ENCODE measurements at regions of chr14 and their contacts with region 1.

Region 1: DNA sequence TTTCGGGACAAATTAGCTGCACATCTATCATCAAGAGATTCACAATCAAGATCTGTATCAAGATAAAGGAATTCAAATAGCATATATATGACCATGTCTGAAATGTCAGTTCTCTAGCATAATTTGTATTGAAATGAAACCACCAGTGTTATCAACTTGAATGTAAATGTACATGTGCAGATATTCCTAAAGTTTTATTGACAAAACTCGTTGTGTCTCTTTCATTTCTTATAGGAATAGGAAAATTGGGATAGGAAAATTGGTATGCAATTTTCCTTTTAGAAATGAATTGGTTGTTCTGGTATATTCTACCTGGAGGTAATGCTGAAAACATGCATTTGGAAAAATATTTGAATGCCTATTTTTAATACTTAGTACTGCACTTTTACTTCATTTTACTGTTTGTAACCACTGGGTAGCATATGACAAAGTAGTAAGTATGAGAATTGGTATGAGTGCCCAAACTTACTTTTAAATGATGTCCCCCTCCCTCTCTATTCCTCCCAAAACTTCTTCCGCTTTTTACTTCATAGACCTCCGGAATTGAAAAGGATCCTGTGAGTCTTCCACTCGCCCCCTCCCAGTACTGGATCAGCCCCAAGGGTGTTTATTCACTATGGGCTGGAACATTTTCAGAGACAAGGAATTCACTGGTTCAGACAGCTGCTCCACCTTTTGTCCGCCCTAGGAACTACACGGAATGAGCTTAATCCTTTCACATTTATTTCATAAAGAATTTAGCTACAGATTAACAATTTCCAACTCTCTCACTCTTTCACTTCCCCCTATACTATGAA is 21.0 kb downstream of the CNIH1 start:
- DNase-seq: peak; percentile 58
- ATAC-seq: peak; percentile 96
- H3K4me3 ChIP-seq: no peak overlapping the region
- H3K27ac ChIP-seq: peak overlapping the region; percentile 3; the same call in 1 of the 2 replicates
- H3K4me1 ChIP-seq: no peaks in the 10 kb centered on the region
- H3K27me3 ChIP-seq: no peaks in the 10 kb centered on the region
- CTCF ChIP-seq: peak; percentile 58
- POLR2A ChIP-seq: no peak
- RAD21 ChIP-seq: peak; percentile 54

Region 2: GRCh38 chr14:54040846-54041245 is 379.4 kb before region 1 on chr14:
- CTCF ChIA-PET with region 1: no interaction called
- POLR2A ChIA-PET with region 1: no interaction called
- dilution Hi-C with region 1: no loop called
- in situ Hi-C with region 1: no loop called
- intact Hi-C with region 1: no loop called
- DNase-seq: peak; percentile 42
- ATAC-seq: peak; percentile 72
- H3K4me3 ChIP-seq: no peak overlapping the region
- H3K27ac ChIP-seq: no peak overlapping the region
- H3K4me1 ChIP-seq: 0 out of 2 replicates have a peak, but pooled peaks cover 3% of the 10 kb centered on the region
- H3K27me3 ChIP-seq: no peaks in the 10 kb centered on the region; the same call in 1 of the 2 replicates
- CTCF ChIP-seq: no peak
- POLR2A ChIP-seq: no peak
- RAD21 ChIP-seq: no peak

Region 3: GRCh38 chr14:54182419-54183045 is 237.7 kb before region 1 on chr14:
- CTCF ChIA-PET with region 1: no interaction called
- POLR2A ChIA-PET with region 1: no interaction called
- dilution Hi-C with region 1: no loop called
- in situ Hi-C with region 1: no loop called
- intact Hi-C with region 1: loop called (anchors 1 kb)
- DNase-seq: peak; percentile 74
- ATAC-seq: peak; percentile 76
- H3K4me3 ChIP-seq: no peak overlapping the region
- H3K27ac ChIP-seq: no peak overlapping the region
- H3K4me1 ChIP-seq: peaks cover 9% of the 10 kb centered on the region
- H3K27me3 ChIP-seq: peaks cover 8% of the 10 kb centered on the region
- CTCF ChIP-seq: no peak
- POLR2A ChIP-seq: no peak
- RAD21 ChIP-seq: no peak

Region 4: DNA sequence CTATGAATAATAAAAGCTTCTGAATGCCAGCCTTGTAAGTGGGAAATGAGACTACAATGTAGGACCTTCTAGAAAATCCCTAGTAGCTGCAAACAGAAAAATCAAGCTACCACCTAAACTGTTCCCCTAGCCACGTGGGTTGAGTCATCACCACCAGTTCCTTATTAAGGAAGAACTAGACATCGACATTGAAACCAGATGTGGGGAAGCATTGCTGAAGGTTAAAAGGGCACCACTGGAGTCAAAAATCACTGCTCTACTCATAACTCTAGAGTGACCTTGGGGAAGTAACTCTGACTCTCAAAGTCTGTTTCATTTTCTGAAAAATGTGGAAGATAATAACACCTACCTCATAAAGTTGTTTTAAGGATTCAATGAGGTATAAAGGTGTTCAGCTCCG is 30.3 kb after region 1 on chr14:
- CTCF ChIA-PET with region 1: no interaction called
- POLR2A ChIA-PET with region 1: no interaction called
- dilution Hi-C with region 1: no loop called
- in situ Hi-C with region 1: no loop called
- intact Hi-C with region 1: no loop called
- DNase-seq: peak; percentile 60
- ATAC-seq: peak; percentile 56
- H3K4me3 ChIP-seq: no peak overlapping the region
- H3K27ac ChIP-seq: no peak overlapping the region
- H3K4me1 ChIP-seq: peaks cover 2% of the 10 kb centered on the region; the same call in 1 of the 2 replicates
- H3K27me3 ChIP-seq: no peaks in the 10 kb centered on the region
- CTCF ChIP-seq: no peak
- POLR2A ChIP-seq: no peak
- RAD21 ChIP-seq: no peak

Region 5: DNA sequence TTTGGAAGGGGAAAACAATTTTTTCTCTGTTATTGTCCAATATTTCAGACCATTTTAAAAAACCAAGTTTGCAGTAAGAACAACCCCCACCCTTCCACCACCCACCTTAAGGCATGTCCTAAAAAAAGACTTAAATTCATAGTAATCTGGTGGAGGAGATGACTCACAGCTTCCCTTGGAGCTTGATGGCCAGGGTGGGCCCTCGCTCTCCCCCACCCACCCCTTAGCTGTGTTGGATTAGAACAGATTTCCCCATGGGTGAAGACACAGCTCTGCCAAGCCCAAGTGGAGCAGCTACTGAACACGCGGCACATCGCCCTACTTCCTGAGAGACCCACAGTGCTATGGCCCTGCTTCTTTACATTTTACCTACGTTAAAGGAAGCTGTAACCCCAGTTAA is 342.1 kb after region 1 on chr14:
- CTCF ChIA-PET with region 1: no interaction called
- POLR2A ChIA-PET with region 1: no interaction called
- dilution Hi-C with region 1: no loop called
- in situ Hi-C with region 1: no loop called
- intact Hi-C with region 1: no loop called
- DNase-seq: peak; percentile 49
- ATAC-seq: no peak; the same call in 1 of the 2 replicates
- H3K4me3 ChIP-seq: no peak overlapping the region
- H3K27ac ChIP-seq: no peak overlapping the region
- H3K4me1 ChIP-seq: peaks cover 9% of the 10 kb centered on the region
- H3K27me3 ChIP-seq: no peaks in the 10 kb centered on the region
- CTCF ChIP-seq: no peak
- POLR2A ChIP-seq: no peak
- RAD21 ChIP-seq: no peak